B cell (primary cell): ENCODE measurements at regions of chr6 and their contacts with region 1.

Region 1: DNA sequence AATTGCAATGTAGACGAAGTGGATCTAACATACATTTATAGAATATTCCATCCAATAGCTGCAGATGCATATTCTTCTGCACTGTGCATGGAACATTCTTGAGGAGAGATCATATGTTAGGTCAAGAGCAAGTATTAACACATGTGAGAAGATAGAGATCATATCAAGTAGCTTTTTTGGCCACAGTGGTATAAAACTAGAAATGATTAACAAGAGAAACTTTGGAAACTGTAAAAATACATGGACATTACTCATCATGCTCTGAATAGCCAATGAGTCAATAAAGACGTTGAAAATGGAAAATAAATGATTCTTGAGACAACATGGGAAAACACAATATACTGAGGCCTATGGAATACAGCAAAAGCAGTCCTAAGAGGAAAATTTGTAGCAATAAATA is 94.2 kb downstream of the STXBP5 start:
- DNase-seq: no peak
- ATAC-seq: no peak
- H3K4me3 ChIP-seq: no peak overlapping the region
- H3K4me3 Mint-ChIP-seq: no peak overlapping the region
- H3K27ac ChIP-seq: no peak overlapping the region
- H3K27ac Mint-ChIP-seq: no peak overlapping the region
- H3K4me1 ChIP-seq: no peaks in the 10 kb centered on the region
- H3K4me1 Mint-ChIP-seq: no peaks in the 10 kb centered on the region
- H3K27me3 ChIP-seq: no peaks in the 10 kb centered on the region
- H3K27me3 Mint-ChIP-seq: no peaks in the 10 kb centered on the region
- CTCF ChIP-seq: no peak

Region 2: DNA sequence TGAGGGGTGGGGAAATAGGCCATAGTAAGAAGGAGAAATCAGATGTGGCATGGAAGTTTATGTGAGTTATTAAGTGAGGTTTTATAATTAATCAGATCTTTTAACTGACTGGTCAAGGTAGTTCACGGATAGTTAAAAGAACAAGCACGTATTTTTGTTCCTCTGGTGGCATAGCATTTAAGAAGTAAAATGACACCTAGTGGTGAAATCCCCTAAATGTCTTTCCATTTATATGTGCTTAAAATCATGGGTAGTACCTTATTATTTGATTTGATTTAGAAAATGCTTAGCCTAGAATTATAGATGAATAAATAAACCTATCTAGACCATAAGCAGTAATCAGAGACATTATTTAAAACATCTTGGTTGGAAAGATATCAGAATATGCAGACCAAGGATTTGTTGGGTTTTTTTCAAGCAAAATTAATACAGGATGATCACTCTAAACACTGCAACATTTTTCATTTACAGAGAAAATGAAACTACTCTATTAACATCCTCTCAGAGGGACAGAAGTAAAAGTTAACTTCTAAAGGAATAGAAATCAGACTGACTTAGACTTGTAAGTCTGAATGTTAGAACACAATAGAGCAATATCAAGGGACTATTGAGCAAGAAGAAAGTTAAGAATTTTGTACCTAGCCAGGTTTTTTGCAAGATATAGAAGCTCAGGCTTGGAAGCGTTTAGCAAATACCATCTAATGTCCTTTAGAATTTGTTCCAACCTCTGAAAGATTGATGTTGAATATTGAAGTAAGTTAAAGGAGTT is 13.2 kb before region 1 on chr6:
- CTCF ChIA-PET with region 1: no interaction called
- POLR2A ChIA-PET with region 1: no interaction called
- intact Hi-C with region 1: loop called (anchors 2 kb)
- DNase-seq: peak; percentile 38
- ATAC-seq: no peak
- H3K4me3 ChIP-seq: no peak overlapping the region
- H3K4me3 Mint-ChIP-seq: no peak overlapping the region
- H3K27ac ChIP-seq: peak overlapping the region in 1 of 2 donors; percentile 4
- H3K27ac Mint-ChIP-seq: peak overlapping the region; percentile 2
- H3K4me1 ChIP-seq: peaks cover 0 to 6% of the 10 kb centered on the region in 2 donors
- H3K4me1 Mint-ChIP-seq: peaks cover 8% of the 10 kb centered on the region
- H3K27me3 ChIP-seq: no peaks in the 10 kb centered on the region
- H3K27me3 Mint-ChIP-seq: no peaks in the 10 kb centered on the region
- CTCF ChIP-seq: peak; percentile 58

Region 3: GRCh38 chr6:147322299-147323162 is 24.1 kb after region 1 on chr6:
- CTCF ChIA-PET with region 1: no interaction called
- POLR2A ChIA-PET with region 1: no interaction called
- intact Hi-C with region 1: no loop called
- DNase-seq: peak; percentile 73
- ATAC-seq: peak; percentile 94
- H3K4me3 ChIP-seq: peak overlapping the region; percentile 35 to 89 (median 58)
- H3K4me3 Mint-ChIP-seq: peak overlapping the region; percentile 92
- H3K27ac ChIP-seq: peak overlapping the region; percentile 58 to 89
- H3K27ac Mint-ChIP-seq: peak overlapping the region; percentile 96
- H3K4me1 ChIP-seq: peaks cover 16% of the 10 kb centered on the region in 2 donors
- H3K4me1 Mint-ChIP-seq: peaks cover 26% of the 10 kb centered on the region
- H3K27me3 ChIP-seq: no peaks in the 10 kb centered on the region
- H3K27me3 Mint-ChIP-seq: no peaks in the 10 kb centered on the region
- CTCF ChIP-seq: no peak

Region 4: GRCh38 chr6:147366290-147366689 is 67.8 kb after region 1 on chr6:
- CTCF ChIA-PET with region 1: no interaction called
- POLR2A ChIA-PET with region 1: no interaction called
- intact Hi-C with region 1: no loop called
- DNase-seq: no peak
- ATAC-seq: no peak
- H3K4me3 ChIP-seq: no peak overlapping the region
- H3K4me3 Mint-ChIP-seq: no peak overlapping the region
- H3K27ac ChIP-seq: no peak overlapping the region
- H3K27ac Mint-ChIP-seq: no peak overlapping the region
- H3K4me1 ChIP-seq: no peaks in the 10 kb centered on the region
- H3K4me1 Mint-ChIP-seq: no peaks in the 10 kb centered on the region
- H3K27me3 ChIP-seq: no peaks in the 10 kb centered on the region
- H3K27me3 Mint-ChIP-seq: no peaks in the 10 kb centered on the region
- CTCF ChIP-seq: no peak